Activated naive CD4-positive, alpha-beta T cell treated with anti-CD3 and anti-CD28 coated beads for 36 hours (primary cell): ENCODE measurements at regions of chr9 and their contacts with region 1.

Region 1: GRCh38 chr9:114348906-114349482 is 19.3 kb downstream of the ORM2 start:
- DNase-seq: peak; percentile 98
- H3K4me3 Mint-ChIP-seq: peak overlapping the region; percentile 24
- H3K27ac Mint-ChIP-seq: peak overlapping the region; percentile 98
- H3K4me1 Mint-ChIP-seq: peaks cover 49% of the 10 kb centered on the region
- H3K27me3 Mint-ChIP-seq: no peaks in the 10 kb centered on the region

Region 2: DNA sequence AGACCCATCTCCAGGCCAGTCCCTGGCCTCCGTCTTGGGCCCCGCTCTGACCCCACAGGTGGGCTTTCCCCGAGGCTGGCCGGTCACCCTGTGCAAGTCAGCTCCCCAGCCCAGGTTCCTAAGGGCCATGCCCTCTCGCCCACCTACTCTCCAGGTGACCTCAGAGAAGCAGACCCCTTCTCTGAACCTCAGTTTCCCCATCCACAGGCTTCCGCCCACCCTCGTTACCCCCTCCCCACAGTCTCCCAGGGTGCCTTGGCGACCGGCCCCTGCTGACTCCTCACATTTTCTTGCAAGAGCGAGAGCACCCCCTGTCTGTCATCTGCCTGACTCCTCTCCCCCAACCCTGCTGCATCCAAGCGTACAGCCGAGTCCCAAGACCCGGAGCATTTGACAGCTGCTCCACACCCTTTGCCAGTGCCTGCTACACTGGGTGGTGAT is 77.3 kb before region 1 on chr9:
- CTCF ChIA-PET with region 1: no interaction called
- intact Hi-C with region 1: no loop called
- DNase-seq: peak; percentile 38
- H3K4me3 Mint-ChIP-seq: no peak overlapping the region
- H3K27ac Mint-ChIP-seq: no peak overlapping the region
- H3K4me1 Mint-ChIP-seq: no peaks in the 10 kb centered on the region
- H3K27me3 Mint-ChIP-seq: no peaks in the 10 kb centered on the region

Region 3: DNA sequence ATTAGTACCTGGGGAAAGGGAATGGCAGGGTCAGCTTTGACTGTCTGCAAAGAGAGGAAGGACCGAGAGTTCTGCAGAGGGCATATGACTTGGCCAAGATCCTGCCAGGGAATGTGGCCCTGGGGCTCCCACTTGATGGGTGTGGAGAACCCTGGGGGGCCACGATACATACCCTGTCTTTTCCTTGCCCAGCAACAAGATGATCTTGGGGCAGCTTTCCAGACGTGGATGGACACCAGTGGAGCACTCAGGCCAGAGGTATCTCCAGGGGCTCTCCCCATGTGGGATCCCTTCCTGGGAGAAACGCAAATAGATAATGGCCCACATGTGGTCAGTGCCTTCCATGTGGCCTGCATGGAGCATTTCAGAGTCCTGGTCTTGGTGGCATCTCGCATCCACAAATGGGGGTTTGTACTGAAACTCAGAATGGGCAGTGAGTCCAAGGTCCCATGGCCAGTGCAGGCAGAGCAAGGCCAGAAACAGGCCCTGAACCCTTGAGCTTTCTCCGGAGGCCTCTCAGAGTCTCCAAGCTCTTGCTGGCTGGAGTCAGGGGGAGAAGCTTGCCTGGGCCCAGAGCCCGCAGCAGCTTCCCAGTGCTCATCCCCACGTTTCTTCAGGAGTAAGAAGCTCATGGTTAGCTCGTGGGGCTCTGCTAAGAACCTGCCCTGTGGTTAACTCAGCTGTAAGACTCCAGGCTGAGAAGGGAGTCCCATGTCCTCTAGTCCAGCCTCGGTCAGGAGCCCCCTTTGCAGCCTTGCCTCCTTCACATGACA is 44.4 kb before region 1 on chr9:
- CTCF ChIA-PET with region 1: no interaction called
- intact Hi-C with region 1: no loop called
- DNase-seq: no peak
- H3K4me3 Mint-ChIP-seq: no peak overlapping the region
- H3K27ac Mint-ChIP-seq: no peak overlapping the region
- H3K4me1 Mint-ChIP-seq: peaks cover 4% of the 10 kb centered on the region
- H3K27me3 Mint-ChIP-seq: no peaks in the 10 kb centered on the region

Region 4: DNA sequence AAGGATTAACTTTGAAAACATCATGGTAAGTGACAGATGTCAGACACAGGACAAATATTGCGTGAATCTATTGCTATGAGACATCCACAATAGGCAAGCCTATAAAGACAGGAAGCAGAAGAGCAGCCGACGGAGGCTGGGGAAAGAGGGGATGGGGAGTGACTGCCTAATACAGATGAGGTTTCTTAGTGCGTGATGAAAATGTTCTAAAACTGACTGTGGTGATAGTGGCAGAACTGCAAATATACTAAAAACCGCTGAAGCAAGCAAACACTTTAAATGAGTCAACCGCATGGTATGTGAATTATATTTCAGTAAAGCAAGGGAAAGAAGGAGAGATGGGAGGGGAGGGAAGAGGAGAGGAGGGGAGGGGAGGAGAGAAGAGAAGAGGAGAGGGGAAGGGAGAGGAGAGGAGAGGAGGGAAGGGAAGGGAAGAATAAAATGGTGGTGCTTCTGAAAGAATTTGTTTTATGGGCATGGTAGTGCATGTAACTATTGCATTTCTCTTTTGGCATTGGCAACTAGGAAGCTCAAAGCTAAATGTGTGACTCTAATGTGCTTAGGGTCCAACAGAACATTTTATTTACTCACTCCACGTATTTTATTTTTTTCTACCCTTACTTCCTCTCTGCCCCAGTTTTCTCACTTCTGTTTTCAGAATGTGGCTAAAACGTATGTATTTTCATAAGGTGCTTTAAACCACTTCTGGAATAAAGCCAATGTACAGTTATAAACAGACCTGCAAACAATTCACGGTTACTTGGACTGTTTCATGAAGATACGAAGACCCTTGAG is 17.5 kb after region 1 on chr9:
- CTCF ChIA-PET with region 1: interaction called, 5 read pairs
- intact Hi-C with region 1: loop called (anchors 1 kb)
- DNase-seq: peak; percentile 70
- H3K4me3 Mint-ChIP-seq: peak overlapping the region; percentile 25
- H3K27ac Mint-ChIP-seq: peak overlapping the region; percentile 93
- H3K4me1 Mint-ChIP-seq: peaks cover 77% of the 10 kb centered on the region
- H3K27me3 Mint-ChIP-seq: no peaks in the 10 kb centered on the region

Region 5: GRCh38 chr9:114372921-114373448 is 24.0 kb after region 1 on chr9:
- CTCF ChIA-PET with region 1: interaction called, 5 read pairs
- intact Hi-C with region 1: loop called (anchors 1 kb)
- DNase-seq: peak; percentile 93
- H3K4me3 Mint-ChIP-seq: peak overlapping the region; percentile 67
- H3K27ac Mint-ChIP-seq: peak overlapping the region; percentile 95
- H3K4me1 Mint-ChIP-seq: peaks cover 81% of the 10 kb centered on the region
- H3K27me3 Mint-ChIP-seq: no peaks in the 10 kb centered on the region

Region 6: DNA sequence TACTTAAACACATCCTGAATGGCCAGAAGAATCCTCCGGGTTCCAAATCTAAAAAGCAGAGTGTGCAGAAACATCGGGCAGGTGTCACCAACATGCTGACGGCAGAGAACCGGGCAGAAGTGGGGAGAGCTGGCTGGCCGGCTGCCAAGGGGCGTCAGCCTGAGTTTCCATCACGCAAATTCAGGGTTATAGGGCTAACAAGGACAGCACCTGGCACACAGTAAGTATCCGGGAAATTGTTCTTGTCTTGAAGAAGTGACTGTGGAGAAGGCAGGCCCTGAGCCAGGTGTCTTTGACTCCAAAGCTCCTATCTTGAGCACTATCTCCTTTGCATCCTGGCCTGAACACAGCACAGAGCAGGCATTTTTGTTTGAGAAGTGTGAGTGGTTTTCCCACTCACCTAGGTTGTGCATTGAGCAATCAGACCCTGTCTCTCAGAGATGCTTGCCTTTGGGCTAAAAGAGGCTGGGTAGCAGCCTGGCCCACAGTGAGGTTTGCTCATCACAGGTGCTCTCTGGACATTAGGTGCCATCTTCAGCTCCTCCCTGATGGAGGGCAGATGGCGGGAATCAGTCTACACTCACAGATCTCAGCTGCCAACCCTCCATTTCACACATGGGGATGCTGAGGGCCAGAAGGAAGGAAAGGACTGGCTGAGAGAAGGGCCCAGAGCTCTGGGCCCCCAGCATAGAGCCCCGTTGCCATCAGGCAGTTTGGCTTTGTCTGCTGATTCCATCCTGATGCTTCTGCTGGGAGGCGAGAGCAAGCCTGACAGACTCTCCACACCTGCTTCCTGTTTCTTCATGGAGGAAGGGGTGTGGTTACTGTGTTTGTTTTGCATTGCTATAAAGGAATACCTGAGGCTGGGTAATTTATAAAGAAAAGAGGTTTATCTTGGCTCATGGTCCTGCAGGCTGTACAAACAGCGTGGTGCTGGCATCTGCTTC is 103.5 kb after region 1 on chr9:
- CTCF ChIA-PET with region 1: no interaction called
- intact Hi-C with region 1: no loop called
- DNase-seq: peak; percentile 73
- H3K4me3 Mint-ChIP-seq: no peak overlapping the region
- H3K27ac Mint-ChIP-seq: peak overlapping the region; percentile 65
- H3K4me1 Mint-ChIP-seq: peaks cover 23% of the 10 kb centered on the region
- H3K27me3 Mint-ChIP-seq: no peaks in the 10 kb centered on the region

Region 7: GRCh38 chr9:114611516-114612271 is 262.7 kb after region 1 on chr9:
- CTCF ChIA-PET with region 1: no interaction called
- intact Hi-C with region 1: loop called (anchors 2 kb)
- DNase-seq: peak; percentile 37
- H3K4me3 Mint-ChIP-seq: peak overlapping the region; percentile 79
- H3K27ac Mint-ChIP-seq: peak overlapping the region; percentile 82
- H3K4me1 Mint-ChIP-seq: peaks cover 52% of the 10 kb centered on the region
- H3K27me3 Mint-ChIP-seq: no peaks in the 10 kb centered on the region